Ovary (tissue), 10 donors: ENCODE measurements at regions of chr3 and their contacts with region 1.

Region 1: GRCh38 chr3:72887705-72888545 is at the start of gene GXYLT2:
- DNase-seq: peak; percentile 74 to 81 (median 80)
- H3K4me3 ChIP-seq: peak within 1 kb of the TSS; percentile 34
- H3K27ac ChIP-seq: peak within 1 kb of the TSS; percentile 70 to 80
- H3K4me1 ChIP-seq: peaks cover 11% of the 10 kb centered on the region
- H3K27me3 ChIP-seq: no peaks in the 10 kb centered on the region
- CTCF ChIP-seq: no peak
- EP300 ChIP-seq: no peak
- POLR2A ChIP-seq: peak; percentile 12
- total RNA-seq, gene GXYLT2: 28.0 to 86.0 (median 47.0) TPM

Region 2: DNA sequence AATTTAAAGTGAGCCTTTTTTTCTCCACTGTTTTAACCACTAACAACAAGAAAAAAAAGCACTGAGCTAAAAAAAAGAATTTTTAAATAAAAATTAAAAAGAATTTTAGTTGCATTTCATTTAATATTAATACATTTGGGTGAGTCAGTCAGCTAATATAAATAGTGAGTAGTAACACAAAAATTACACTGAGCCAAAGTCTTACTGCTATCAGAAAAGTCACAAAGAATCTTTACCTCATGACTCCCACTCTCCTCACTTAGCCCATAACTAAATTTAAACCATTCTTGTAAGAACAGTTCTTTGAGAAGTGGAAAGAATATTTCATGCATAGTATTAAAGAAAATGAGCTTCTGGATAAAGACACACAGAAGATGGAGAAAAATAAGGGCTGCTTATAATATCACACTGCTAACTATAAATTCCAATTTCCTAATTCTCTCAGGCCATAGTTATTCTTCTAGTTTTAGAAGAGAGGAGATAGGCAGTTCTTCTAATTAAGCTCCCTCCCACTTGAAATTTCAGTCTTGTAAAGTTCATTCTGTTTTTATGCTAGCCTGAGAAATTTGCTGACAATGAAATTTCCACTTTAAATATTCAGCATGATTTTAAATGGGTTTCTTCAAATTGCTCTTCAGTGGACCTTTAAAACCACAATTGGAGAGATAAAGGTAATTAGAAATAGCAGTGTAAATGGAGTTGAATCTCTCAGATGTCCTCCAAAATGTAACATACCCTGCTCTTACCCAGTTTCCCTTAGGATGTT is 57.3 kb before region 1 on chr3:
- intact Hi-C with region 1: no loop called
- DNase-seq: no peak
- H3K4me3 ChIP-seq: no peak overlapping the region
- H3K27ac ChIP-seq: no peak overlapping the region
- H3K4me1 ChIP-seq: no peaks in the 10 kb centered on the region
- H3K27me3 ChIP-seq: no peaks in the 10 kb centered on the region
- CTCF ChIP-seq: no peak
- EP300 ChIP-seq: no peak
- POLR2A ChIP-seq: no peak

Region 3: GRCh38 chr3:72938471-72939265 is 50.7 kb after region 1 on chr3:
- intact Hi-C with region 1: loop called in 1 of 4 experiments (anchors 5 kb)
- DNase-seq: peak; percentile 57 to 91 (median 73)
- H3K4me3 ChIP-seq: no peak overlapping the region
- H3K27ac ChIP-seq: peak overlapping the region in 1 of 2 donors; percentile 80
- H3K4me1 ChIP-seq: peaks cover 3% of the 10 kb centered on the region
- H3K27me3 ChIP-seq: no peaks in the 10 kb centered on the region
- CTCF ChIP-seq: peak; percentile 24 to 97 (median 90)
- EP300 ChIP-seq: peak; percentile 92
- POLR2A ChIP-seq: no peak